AG04450 (cell line): ENCODE measurements at regions of chr2 and their contacts with region 1.

Region 1: GRCh38 chr2:64595397-64596160 is 58.1 kb downstream of the SERTAD2 start:
- DNase-seq: no peak
- H3K4me3 ChIP-seq: no peak overlapping the region
- H3K27ac ChIP-seq: no peak overlapping the region
- H3K27me3 ChIP-seq: peaks cover 30% of the 10 kb centered on the region
- CTCF ChIP-seq: peak; percentile 49

Region 2: GRCh38 chr2:64873472-64873924 is 277.9 kb after region 1 on chr2:
- CTCF ChIA-PET with region 1: interaction called, 18 read pairs
- POLR2A ChIA-PET with region 1: no interaction called
- DNase-seq: no peak
- H3K4me3 ChIP-seq: 0 out of 2 replicates have a peak overlapping the region, but pooled peaks have one; percentile 10
- H3K27ac ChIP-seq: no peak overlapping the region
- H3K27me3 ChIP-seq: peaks cover 36% of the 10 kb centered on the region
- CTCF ChIP-seq: peak; percentile 92

Region 3: DNA sequence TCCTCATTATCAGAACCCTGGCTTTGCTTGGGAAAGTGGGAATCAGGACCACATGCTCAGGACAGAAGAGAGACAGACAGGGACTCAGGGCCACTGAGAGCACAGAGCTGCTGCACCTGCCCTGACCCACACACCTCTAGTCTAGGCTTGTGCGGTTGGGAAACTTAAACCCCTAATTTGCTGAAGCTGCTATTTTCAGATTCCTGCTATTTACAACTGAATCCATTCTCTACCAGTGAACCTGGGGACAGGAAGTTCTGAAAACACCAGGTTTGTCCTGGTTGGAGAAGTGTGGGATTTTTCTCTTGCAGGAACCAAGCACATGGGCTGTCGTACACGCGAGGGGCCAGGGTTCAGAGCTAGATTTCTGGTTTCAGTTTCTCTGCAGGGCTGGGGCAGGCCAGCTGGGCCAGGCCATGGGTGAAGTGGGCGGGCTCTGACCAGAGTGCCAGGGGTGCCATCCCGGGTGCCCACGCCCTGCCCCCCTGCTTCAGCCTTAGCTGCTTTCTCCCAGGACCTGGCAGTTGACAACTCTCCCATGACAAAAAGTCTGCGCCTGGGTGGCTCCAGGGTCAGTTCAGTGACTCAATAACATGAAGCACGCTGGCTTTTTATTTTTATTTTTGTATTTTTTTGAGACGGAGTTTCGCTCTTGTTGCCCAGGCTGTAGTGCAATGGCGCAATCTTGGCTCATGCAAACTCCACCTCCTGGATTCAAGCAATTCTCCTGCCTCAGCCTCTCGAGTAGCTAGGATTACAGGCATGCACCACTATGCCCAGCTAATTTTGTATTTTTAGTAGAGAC is 342.3 kb after region 1 on chr2:
- CTCF ChIA-PET with region 1: no interaction called
- POLR2A ChIA-PET with region 1: no interaction called
- DNase-seq: no peak
- H3K4me3 ChIP-seq: no peak overlapping the region
- H3K27ac ChIP-seq: no peak overlapping the region
- H3K27me3 ChIP-seq: peaks cover 26% of the 10 kb centered on the region
- CTCF ChIP-seq: no peak